WTC11 (cell line): ENCODE measurements at regions of chr7 and their contacts with region 1.

Region 1: GRCh38 chr7:35714862-35715261 is 19.9 kb upstream of the HERPUD2 start:
- DNase-seq: no peak
- ATAC-seq: peak; percentile 74
- H3K4me3 Mint-ChIP-seq: no peak overlapping the region
- H3K27ac Mint-ChIP-seq: no peak overlapping the region
- H3K4me1 Mint-ChIP-seq: peaks cover 8% of the 10 kb centered on the region
- H3K27me3 Mint-ChIP-seq: no peaks in the 10 kb centered on the region; the same call in 1 of the 2 replicates
- CTCF ChIP-seq: no peak

Region 2: GRCh38 chr7:35380739-35381224 is 334.1 kb before region 1 on chr7:
- CTCF ChIA-PET with region 1: no interaction called
- POLR2A ChIA-PET with region 1: no interaction called
- DNase-seq: no peak
- ATAC-seq: no peak
- H3K4me3 Mint-ChIP-seq: no peak overlapping the region
- H3K27ac Mint-ChIP-seq: no peak overlapping the region
- H3K4me1 Mint-ChIP-seq: no peaks in the 10 kb centered on the region
- H3K27me3 Mint-ChIP-seq: peaks cover 5% of the 10 kb centered on the region
- CTCF ChIP-seq: no peak

Region 3: GRCh38 chr7:35670856-35671569 is 43.8 kb before region 1 on chr7:
- CTCF ChIA-PET with region 1: no interaction called
- POLR2A ChIA-PET with region 1: no interaction called
- DNase-seq: no peak
- ATAC-seq: peak; percentile 46
- H3K4me3 Mint-ChIP-seq: no peak overlapping the region
- H3K27ac Mint-ChIP-seq: peak overlapping the region; percentile 54
- H3K4me1 Mint-ChIP-seq: peaks cover 38% of the 10 kb centered on the region
- H3K27me3 Mint-ChIP-seq: no peaks in the 10 kb centered on the region
- CTCF ChIP-seq: no peak

Region 4: GRCh38 chr7:35694781-35695472 is 19.9 kb before region 1 on chr7 and contains the start of gene HERPUD2:
- CTCF ChIA-PET with region 1: interaction called, 12 read pairs
- POLR2A ChIA-PET with region 1: no interaction called
- DNase-seq: peak; percentile 94
- ATAC-seq: peak; percentile 93
- H3K4me3 Mint-ChIP-seq: peak within 1 kb of the TSS; percentile 92
- H3K27ac Mint-ChIP-seq: peak within 1 kb of the TSS; percentile 93
- H3K4me1 Mint-ChIP-seq: peaks cover 44% of the 10 kb centered on the region
- H3K27me3 Mint-ChIP-seq: peaks cover 10% of the 10 kb centered on the region
- CTCF ChIP-seq: no peak
- total RNA-seq, gene HERPUD2: 15.5 to 18.5 TPM (median 16.2 TPM) in 3 replicates

Region 5: DNA sequence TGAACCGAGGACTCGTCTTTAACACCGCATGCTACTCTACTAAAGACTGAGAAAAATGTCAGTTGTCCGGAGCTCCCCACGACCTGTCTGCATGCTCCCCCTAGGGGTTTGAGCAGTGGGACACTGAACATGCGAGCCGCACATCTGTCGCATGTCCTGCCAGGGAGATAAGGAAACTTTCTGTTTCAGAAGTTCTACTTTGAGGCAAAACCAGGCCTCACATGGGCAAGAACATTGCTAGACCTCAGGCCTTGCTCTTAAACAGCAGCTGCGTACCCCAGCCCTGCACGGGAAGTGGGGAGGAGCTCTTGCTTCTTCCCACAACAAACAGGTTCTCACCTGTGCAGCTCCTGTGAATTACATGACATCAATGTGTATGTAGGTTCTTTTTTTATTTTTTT is 10.4 kb after region 1 on chr7:
- CTCF ChIA-PET with region 1: interaction called, 13 read pairs
- POLR2A ChIA-PET with region 1: no interaction called
- DNase-seq: no peak
- ATAC-seq: peak; percentile 72
- H3K4me3 Mint-ChIP-seq: no peak overlapping the region
- H3K27ac Mint-ChIP-seq: no peak overlapping the region
- H3K4me1 Mint-ChIP-seq: no peaks in the 10 kb centered on the region
- H3K27me3 Mint-ChIP-seq: no peaks in the 10 kb centered on the region
- CTCF ChIP-seq: no peak

Region 6: DNA sequence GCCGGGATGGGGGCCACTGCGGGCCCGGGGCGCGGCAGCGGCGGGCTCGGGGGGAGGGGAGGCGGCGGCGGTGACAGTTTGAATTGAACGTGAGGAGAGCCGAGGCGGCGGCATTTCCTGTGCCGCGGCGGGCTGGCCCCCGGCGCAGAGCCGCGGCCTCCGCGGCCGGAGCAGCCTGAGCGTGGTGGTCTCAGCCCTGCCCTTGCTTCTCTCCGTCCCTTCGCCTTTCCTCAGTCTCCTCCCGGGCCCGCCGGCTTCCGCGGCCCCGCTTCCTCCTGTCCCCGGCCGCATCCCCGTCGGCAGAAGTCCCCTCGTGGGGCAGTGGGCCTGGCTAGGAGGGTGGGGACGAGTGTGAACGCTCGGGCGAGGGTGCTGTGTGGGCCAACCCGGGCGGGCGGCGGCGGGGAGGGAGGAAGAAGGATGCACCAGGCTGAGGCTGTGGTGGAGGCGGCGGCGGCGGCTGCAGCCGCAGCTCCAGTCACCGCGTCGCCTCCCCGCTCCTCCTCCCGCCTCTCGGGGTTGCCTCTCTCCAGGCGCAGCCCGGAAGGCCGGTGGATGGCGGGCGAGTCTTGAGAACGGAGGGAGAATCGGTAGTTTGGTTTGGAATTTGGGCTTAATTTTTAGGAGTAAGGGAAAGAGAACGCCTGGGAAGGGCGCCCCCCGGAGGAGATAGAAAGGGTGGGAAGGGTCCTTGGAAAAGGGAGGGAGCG is 86.7 kb after region 1 on chr7:
- CTCF ChIA-PET with region 1: interaction called, 32 read pairs
- POLR2A ChIA-PET with region 1: interaction called, 10 read pairs
- DNase-seq: peak; percentile 67
- ATAC-seq: peak; percentile 3
- H3K4me3 Mint-ChIP-seq: peak overlapping the region; percentile 90
- H3K27ac Mint-ChIP-seq: peak overlapping the region; percentile 91; the same call in 1 of the 2 replicates
- H3K4me1 Mint-ChIP-seq: peaks cover 41% of the 10 kb centered on the region
- H3K27me3 Mint-ChIP-seq: no peaks in the 10 kb centered on the region
- CTCF ChIP-seq: peak; percentile 62